ENCODE measurements at regions of chr9 and their contacts with region 1.

Region 1: GRCh38 chr9:94213511-94214124 is 45.5 kb upstream of the ZNF169 start:
- DNase-seq: peak; percentile 87
- H3K4me3 ChIP-seq: no peak overlapping the region
- H3K27ac ChIP-seq: no peak overlapping the region
- H3K4me1 ChIP-seq: peaks cover 2% of the 10 kb centered on the region
- CTCF ChIP-seq: peak; percentile 92

Region 2: DNA sequence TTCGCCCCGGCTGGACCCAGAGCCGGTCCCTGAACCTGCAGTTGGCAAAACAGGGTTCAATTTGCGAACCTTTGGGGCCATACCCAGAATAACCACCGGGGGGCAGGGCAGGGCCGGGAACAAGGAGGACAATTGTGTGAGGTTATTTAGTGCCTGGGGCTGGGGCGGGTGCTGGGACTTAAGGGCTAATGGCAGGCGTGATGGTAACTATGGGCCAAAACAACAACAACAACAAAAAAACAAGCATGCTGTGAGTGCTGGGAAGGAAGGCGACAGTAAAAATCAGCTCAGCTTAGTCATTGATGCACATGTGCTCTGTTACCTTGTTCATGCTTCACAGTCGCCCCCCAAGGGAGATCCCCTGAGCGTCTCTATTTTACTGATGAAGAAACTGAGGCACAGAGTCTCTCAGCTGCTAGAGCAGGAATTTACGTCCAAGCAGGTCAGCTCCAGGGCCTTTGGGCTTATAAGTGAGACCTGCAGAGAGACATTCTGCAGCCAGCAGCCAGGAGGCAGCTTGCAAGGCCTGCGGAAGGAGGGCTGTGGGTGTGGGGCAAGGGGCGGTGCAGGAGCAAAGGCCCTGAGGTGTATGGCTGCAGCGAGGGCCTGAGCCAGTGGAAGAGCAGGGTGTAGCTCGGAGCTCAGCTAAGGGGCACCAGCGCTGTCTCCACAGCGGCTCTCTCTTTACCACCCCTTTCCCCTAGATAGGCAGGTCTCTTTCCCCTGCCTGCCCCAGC is 531.2 kb before region 1 on chr9:
- CTCF ChIA-PET with region 1: no interaction called
- POLR2A ChIA-PET with region 1: no interaction called
- intact Hi-C with region 1: loop called (anchors 2 kb)
- DNase-seq: peak; percentile 50
- H3K4me3 ChIP-seq: no peak overlapping the region
- H3K27ac ChIP-seq: no peak overlapping the region
- H3K4me1 ChIP-seq: no peaks in the 10 kb centered on the region
- CTCF ChIP-seq: peak; percentile 89

Region 3: GRCh38 chr9:94014065-94014654 is 199.5 kb before region 1 on chr9:
- CTCF ChIA-PET with region 1: interaction called, 4 read pairs
- POLR2A ChIA-PET with region 1: no interaction called
- intact Hi-C with region 1: loop called (anchors 1 kb)
- DNase-seq: peak; percentile 38
- H3K4me3 ChIP-seq: no peak overlapping the region
- H3K27ac ChIP-seq: no peak overlapping the region
- H3K4me1 ChIP-seq: no peaks in the 10 kb centered on the region
- CTCF ChIP-seq: peak; percentile 81

Region 4: DNA sequence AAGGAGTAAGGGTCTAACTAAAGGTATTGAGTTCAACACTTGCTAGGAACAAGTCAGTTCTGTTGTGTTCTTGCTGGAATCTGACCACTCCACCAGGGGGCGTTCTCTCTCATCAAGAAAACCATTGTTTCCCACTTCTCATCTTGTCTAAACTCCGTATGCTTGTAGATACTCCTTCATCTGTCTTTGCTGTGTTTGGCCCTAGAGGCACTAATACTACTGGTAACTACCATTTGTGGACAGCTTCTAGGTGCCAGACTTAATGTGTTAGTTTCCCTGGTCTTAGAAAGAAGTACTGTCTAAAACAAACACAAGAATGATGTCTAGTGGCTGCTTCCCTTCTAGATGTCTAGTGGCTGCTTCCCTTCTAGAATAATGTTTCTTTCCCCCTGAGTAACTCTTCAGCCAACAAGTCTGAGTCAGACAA is 148.1 kb before region 1 on chr9:
- CTCF ChIA-PET with region 1: interaction called, 3 read pairs
- POLR2A ChIA-PET with region 1: interaction called, 5 read pairs
- intact Hi-C with region 1: loop called (anchors 1 kb)
- DNase-seq: peak; percentile 83
- H3K4me3 ChIP-seq: no peak overlapping the region
- H3K27ac ChIP-seq: no peak overlapping the region
- H3K4me1 ChIP-seq: no peaks in the 10 kb centered on the region
- CTCF ChIP-seq: peak; percentile 95

Region 5: GRCh38 chr9:94139672-94140417 is 73.8 kb before region 1 on chr9:
- CTCF ChIA-PET with region 1: no interaction called
- POLR2A ChIA-PET with region 1: no interaction called
- intact Hi-C with region 1: loop called (anchors 10 kb)
- DNase-seq: no peak
- H3K4me3 ChIP-seq: no peak overlapping the region
- H3K27ac ChIP-seq: no peak overlapping the region
- H3K4me1 ChIP-seq: no peaks in the 10 kb centered on the region
- CTCF ChIP-seq: no peak

Region 6: GRCh38 chr9:94534901-94535300 is 321.3 kb after region 1 on chr9:
- CTCF ChIA-PET with region 1: no interaction called
- POLR2A ChIA-PET with region 1: interaction called, 4 read pairs
- intact Hi-C with region 1: loop called (anchors 5 kb)
- DNase-seq: no peak
- H3K4me3 ChIP-seq: no peak overlapping the region
- H3K27ac ChIP-seq: peak overlapping the region; percentile 43
- H3K4me1 ChIP-seq: peaks cover 43% of the 10 kb centered on the region
- CTCF ChIP-seq: no peak

Measured in OCI-LY7 (cell line).